Adrenal gland (tissue), 19 donors: ENCODE measurements at regions of chr15 and their contacts with region 1.

Region 1: DNA sequence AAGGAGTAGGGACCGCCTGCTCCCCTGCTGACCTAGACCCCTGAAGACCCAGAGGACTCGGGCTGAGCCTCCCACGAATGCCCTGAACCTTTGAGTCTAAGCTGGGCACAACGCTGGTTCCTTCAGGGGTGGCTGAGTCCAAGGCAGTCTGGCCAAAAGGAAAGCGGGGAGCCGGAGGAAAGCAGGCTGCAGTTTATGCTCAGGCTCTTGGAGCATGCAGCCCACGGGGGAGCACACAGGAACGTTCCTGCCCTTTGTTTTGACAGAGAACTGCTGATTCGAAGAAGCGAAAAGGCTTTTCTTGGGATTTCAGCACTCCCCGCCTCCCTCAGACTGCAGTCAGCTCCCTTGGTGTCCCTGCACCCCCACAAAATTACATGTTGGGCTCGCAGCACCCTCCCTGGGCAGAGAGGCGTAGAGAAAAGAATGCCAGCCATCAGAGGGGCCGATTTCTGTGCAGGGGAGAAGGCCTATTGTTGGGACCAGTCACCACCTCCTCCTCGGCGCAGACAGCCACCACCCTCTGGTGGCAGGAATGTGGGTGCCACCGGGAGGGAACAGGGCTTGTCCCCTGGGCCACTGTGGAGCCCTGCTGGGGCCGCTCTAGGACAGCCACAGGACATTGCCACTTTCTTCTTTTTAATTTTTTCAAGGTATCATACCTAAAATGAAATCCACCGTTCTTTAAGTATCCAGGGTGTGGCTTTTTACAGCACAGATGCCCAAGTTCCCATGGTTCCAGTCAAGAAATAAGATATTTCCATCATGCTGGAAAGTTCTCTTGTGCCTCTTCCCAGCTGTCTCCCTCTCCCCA is 72.2 kb downstream of the SMAD6 start:
- DNase-seq: peak; percentile 82 to 91 (median 87)
- H3K4me3 ChIP-seq: no peak overlapping the region
- H3K27ac ChIP-seq: peak overlapping the region in 2 of 5 donors; percentile 38 to 80
- H3K4me1 ChIP-seq: peaks cover 0 to 6% of the 10 kb centered on the region in 2 donors
- H3K27me3 ChIP-seq: no peaks in the 10 kb centered on the region
- CTCF ChIP-seq: peak; percentile 89 to 99 (median 98)
- POLR2A ChIP-seq: no peak

Region 2: GRCh38 chr15:66603301-66604179 is 170.7 kb before region 1 on chr15:
- intact Hi-C with region 1: loop called in 1 of 2 experiments (anchors 5 kb)
- DNase-seq: peak; percentile 40 to 68 (median 56)
- H3K4me3 ChIP-seq: no peak overlapping the region
- H3K27ac ChIP-seq: no peak overlapping the region
- H3K4me1 ChIP-seq: no peaks in the 10 kb centered on the region
- H3K27me3 ChIP-seq: no peaks in the 10 kb centered on the region
- CTCF ChIP-seq: peak; percentile 46 to 72 (median 62)
- POLR2A ChIP-seq: no peak

Region 3: GRCh38 chr15:66619151-66619903 is 154.9 kb before region 1 on chr15:
- intact Hi-C with region 1: loop called (anchors 2 to 5 kb)
- DNase-seq: peak; percentile 74 to 89 (median 83)
- H3K4me3 ChIP-seq: no peak overlapping the region
- H3K27ac ChIP-seq: peak overlapping the region in 1 of 5 donors; percentile 7
- H3K4me1 ChIP-seq: peaks cover 0 to 13% of the 10 kb centered on the region in 2 donors
- H3K27me3 ChIP-seq: peaks cover 13% of the 10 kb centered on the region
- CTCF ChIP-seq: peak; percentile 77 to 89 (median 84)
- POLR2A ChIP-seq: no peak

Region 4: GRCh38 chr15:66715181-66715624 is 59.0 kb before region 1 on chr15:
- intact Hi-C with region 1: loop called in 1 of 2 experiments (anchors 5 kb)
- DNase-seq: no peak
- H3K4me3 ChIP-seq: no peak overlapping the region
- H3K27ac ChIP-seq: no peak overlapping the region
- H3K4me1 ChIP-seq: peaks cover 3 to 25% of the 10 kb centered on the region in 2 donors
- H3K27me3 ChIP-seq: no peaks in the 10 kb centered on the region
- CTCF ChIP-seq: no peak
- POLR2A ChIP-seq: no peak